ENCODE measurements at regions of chr17 and their contacts with region 1.

Region 1: GRCh38 chr17:2172077-2172851 is 117.4 kb downstream of the HIC1 start:
- DNase-seq: peak; percentile 98
- H3K4me3 ChIP-seq: peak overlapping the region in 1 of 3 experiments; percentile 40
- H3K27ac ChIP-seq: peak overlapping the region; percentile 94
- H3K4me1 ChIP-seq: peaks cover 59% of the 10 kb centered on the region
- H3K27me3 ChIP-seq: no peaks in the 10 kb centered on the region
- CTCF ChIP-seq: no peak
- POLR2A ChIP-seq: peak; percentile 43

Region 2: DNA sequence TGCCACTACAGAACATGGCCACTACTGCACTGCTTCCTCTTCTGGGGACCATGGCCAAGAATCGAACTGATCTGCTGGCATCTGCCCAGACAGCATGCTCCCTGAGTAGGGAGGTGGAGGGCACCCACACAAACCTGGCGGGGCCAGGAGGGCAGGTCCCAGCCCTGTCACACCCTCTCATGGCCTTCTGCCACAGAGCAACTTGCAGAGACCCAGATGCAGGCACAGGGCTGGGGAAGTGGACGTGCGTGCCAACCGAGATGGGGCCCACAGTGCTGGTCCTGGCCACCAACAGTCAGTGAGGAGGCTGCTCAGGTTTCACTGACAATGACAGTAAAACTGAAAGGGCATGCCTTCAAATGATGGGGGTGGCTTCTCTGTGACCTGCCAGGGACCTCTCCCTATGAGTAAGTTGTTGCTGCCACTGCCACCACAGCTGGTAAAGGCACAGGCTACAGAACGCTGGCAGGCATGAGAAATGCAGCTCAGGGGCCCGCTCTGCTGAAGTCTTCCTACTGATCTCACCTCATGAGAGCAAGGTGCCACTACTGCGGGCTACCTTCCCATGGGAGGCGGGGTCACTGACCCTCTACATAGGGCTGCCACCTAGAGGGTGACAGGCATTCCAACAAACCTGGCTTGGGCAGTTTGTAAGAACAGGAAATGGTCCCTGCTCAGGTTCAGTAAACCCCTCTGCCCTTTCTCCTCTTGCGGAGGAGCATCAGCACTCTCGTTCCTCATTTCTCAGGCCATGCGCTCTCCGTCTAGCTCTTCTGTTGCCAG is 101.8 kb before region 1 on chr17:
- CTCF ChIA-PET with region 1: interaction called, 6 read pairs
- POLR2A ChIA-PET with region 1: interaction called, 4 read pairs
- dilution Hi-C with region 1: no loop called
- intact Hi-C with region 1: loop called (anchors 1 kb)
- DNase-seq: no peak
- H3K4me3 ChIP-seq: no peak overlapping the region
- H3K27ac ChIP-seq: peak overlapping the region; percentile 93
- H3K4me1 ChIP-seq: peaks cover 62% of the 10 kb centered on the region
- H3K27me3 ChIP-seq: no peaks in the 10 kb centered on the region
- CTCF ChIP-seq: no peak
- POLR2A ChIP-seq: no peak

Region 3: GRCh38 chr17:2087597-2088211 is 84.6 kb before region 1 on chr17:
- CTCF ChIA-PET with region 1: interaction called, 13 read pairs
- POLR2A ChIA-PET with region 1: interaction called, 4 read pairs
- dilution Hi-C with region 1: no loop called
- intact Hi-C with region 1: loop called (anchors 1 kb)
- DNase-seq: peak; percentile 86
- H3K4me3 ChIP-seq: no peak overlapping the region
- H3K27ac ChIP-seq: peak overlapping the region; percentile 54
- H3K4me1 ChIP-seq: peaks cover 75% of the 10 kb centered on the region
- H3K27me3 ChIP-seq: no peaks in the 10 kb centered on the region
- CTCF ChIP-seq: no peak
- POLR2A ChIP-seq: no peak

Region 4: DNA sequence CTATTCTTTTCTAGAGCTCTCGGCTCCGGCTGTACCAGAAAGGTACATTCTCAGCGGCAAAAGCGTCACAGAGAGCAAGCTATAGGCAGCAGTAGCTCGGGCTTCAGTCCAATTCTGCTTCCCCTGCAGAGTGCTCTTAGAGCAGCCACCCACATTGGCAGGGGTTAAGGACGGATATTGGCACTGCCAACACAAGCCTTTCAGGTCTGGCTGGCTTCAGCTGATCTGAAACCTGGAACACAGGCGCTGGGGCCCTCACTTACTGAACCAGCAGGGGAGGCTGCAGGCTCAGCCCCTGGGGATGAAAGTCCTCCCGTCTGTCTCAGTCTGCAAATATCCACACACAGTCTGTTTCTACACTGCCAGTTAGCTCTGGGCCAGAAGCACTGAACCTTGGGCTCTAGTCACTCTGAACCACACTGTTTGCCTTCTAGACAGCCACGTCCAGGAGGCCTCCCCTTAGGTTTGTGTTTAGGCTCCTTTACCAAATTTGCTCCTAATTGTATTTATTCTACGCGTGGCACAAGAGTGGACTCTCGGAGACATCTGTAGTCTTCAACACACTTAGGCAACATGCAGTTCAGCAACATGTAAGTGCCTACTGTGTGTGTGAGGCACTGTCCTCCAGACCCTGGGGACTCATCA is 77.3 kb before region 1 on chr17:
- CTCF ChIA-PET with region 1: interaction called, 14 read pairs
- POLR2A ChIA-PET with region 1: interaction called, 4 read pairs
- dilution Hi-C with region 1: no loop called
- intact Hi-C with region 1: loop called (anchors 1 kb)
- DNase-seq: peak; percentile 78
- H3K4me3 ChIP-seq: no peak overlapping the region
- H3K27ac ChIP-seq: no peak overlapping the region
- H3K4me1 ChIP-seq: peaks cover 15% of the 10 kb centered on the region
- H3K27me3 ChIP-seq: no peaks in the 10 kb centered on the region
- CTCF ChIP-seq: peak; percentile 39 to 77
- POLR2A ChIP-seq: no peak

Region 5: GRCh38 chr17:2111719-2112118 is 60.5 kb before region 1 on chr17:
- CTCF ChIA-PET with region 1: no interaction called
- POLR2A ChIA-PET with region 1: no interaction called
- dilution Hi-C with region 1: no loop called
- intact Hi-C with region 1: no loop called
- DNase-seq: no peak
- H3K4me3 ChIP-seq: no peak overlapping the region
- H3K27ac ChIP-seq: no peak overlapping the region
- H3K4me1 ChIP-seq: peaks cover 8% of the 10 kb centered on the region
- H3K27me3 ChIP-seq: no peaks in the 10 kb centered on the region
- CTCF ChIP-seq: no peak
- POLR2A ChIP-seq: no peak

Region 6: DNA sequence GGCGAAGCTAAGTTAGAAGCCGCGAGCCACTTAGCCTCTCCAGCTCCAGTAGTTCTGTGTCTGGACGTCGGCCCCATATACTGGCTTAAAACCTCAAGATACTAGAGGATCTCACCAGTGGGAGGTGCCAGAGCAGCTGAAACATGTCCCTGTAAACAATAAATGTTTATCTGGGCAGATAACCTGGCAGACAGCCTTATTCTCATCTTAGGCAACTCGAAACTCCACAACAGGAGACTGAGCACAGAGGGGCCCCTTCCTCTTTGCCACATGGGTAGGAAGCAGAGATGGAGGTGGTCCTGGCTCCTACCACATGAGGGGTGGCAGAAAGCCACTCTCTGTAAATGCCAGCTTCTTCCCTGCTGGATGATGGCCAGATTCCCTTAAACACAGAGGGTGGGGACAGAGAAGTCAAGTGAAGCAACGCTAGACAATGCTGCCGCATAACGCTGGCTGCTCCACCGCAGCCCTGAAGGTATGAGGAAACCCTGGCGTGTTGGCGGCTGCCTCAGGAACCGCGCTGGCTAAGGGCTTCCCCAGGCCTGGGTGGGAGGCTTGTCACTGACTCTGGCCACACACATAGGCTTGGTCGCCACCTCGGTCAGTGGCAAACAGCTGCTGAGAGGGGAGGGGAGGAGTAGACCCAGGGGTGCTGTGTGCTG is 49.5 kb before region 1 on chr17:
- CTCF ChIA-PET with region 1: interaction called, 9 read pairs
- POLR2A ChIA-PET with region 1: no interaction called
- dilution Hi-C with region 1: no loop called
- intact Hi-C with region 1: loop called (anchors 1 kb)
- DNase-seq: peak; percentile 73
- H3K4me3 ChIP-seq: no peak overlapping the region
- H3K27ac ChIP-seq: peak overlapping the region; percentile 0
- H3K4me1 ChIP-seq: peaks cover 24% of the 10 kb centered on the region
- H3K27me3 ChIP-seq: no peaks in the 10 kb centered on the region
- CTCF ChIP-seq: no peak
- POLR2A ChIP-seq: no peak

Region 7: DNA sequence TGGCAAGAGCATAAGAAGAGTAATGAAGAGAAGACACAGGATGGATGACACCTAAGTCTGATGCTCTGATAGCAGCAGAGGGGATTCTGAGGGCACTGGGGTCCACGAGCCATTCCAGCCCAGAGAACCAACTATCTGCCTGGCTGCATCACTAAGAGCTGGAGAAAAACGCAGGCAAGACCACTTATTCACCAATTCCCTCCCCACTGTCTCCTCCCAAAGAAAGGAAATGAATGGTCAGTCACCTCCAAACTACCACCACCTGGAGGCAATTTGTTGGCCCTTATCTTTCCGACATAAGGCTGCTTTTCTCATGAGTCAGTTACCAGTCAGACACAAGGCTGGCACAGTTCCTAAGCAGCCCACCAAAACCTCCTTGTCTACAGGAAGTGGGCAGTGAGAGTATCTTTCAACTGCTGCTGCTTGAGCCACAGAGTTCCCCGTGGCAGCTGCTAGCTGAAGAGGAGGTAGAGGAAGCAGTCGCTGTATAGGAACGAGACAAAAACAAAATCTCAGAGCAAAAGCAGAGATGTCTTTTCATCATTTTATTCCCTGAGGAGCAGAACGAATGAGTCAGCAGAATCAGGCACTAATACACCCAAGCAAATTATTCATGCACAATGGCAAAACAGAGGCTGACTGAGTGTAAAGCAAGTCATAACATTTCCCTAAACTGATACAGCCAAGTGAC is 20.2 kb after region 1 on chr17:
- CTCF ChIA-PET with region 1: interaction called, 15 read pairs
- POLR2A ChIA-PET with region 1: interaction called, 10 read pairs
- dilution Hi-C with region 1: no loop called
- intact Hi-C with region 1: loop called (anchors 1 kb)
- DNase-seq: peak; percentile 98
- H3K4me3 ChIP-seq: no peak overlapping the region
- H3K27ac ChIP-seq: peak overlapping the region; percentile 88
- H3K4me1 ChIP-seq: peaks cover 40% of the 10 kb centered on the region
- H3K27me3 ChIP-seq: no peaks in the 10 kb centered on the region
- CTCF ChIP-seq: no peak
- POLR2A ChIP-seq: peak; percentile 75

Region 8: DNA sequence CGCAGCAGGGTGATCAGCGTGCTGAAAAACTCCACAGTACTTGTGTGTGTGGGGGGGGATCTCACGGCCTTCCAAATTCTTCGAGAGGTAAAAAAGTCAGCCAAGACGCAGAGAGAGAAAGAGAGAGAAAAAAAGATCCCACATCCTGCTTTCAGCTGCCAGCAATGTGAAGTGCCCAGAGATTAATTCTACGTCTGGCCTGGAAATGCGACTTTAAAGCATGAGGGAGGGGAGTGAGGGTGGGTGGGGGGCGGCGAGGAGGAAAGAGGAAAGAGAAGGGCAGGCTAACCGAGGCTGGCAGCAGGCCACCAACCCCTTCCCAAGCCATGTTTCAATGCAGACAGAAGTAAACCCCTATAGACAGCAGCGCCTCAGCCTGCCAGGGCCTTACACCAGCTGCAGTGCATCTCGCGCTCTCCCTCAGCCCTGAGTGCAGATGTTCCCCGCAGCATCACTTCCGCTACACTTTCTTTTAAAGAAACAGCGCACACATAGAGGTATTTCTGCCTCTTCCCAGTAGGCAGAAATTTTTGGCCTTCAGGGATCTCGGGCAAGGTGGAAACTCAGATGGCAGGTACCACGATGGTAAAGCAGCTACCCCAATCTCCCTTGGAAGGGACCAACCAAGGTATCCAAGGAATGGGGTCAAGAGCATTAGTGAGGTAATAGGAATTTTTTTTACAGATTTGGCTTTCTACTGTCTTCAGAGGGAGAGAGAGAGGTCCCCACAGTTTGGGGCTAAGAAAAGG is 43.5 kb after region 1 on chr17:
- CTCF ChIA-PET with region 1: interaction called, 6 read pairs
- POLR2A ChIA-PET with region 1: interaction called, 15 read pairs
- dilution Hi-C with region 1: no loop called
- intact Hi-C with region 1: loop called (anchors 1 kb)
- DNase-seq: peak; percentile 84
- H3K4me3 ChIP-seq: no peak overlapping the region
- H3K27ac ChIP-seq: peak overlapping the region; percentile 81
- H3K4me1 ChIP-seq: peaks cover 46% of the 10 kb centered on the region
- H3K27me3 ChIP-seq: no peaks in the 10 kb centered on the region
- CTCF ChIP-seq: no peak
- POLR2A ChIP-seq: peak; percentile 54

Region 9: DNA sequence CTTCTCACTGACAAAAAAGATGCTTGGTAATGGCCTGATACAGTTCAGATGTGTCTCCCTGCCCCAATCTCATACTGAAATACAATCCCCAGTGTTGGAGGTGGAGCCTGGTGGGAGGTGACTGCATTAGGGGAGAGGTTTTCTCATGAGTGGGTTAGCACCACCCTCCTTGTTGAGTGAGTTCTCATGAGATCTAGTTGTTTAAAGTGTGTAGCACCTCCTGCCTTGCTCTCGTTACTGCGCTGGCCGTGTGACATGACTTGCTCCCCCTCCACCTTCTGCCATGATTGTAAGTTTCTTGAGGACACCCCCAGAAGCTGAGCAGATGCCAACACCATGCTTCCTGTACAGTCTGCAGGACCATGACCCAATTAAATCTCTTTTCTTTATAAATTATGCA is 159.0 kb after region 1 on chr17:
- CTCF ChIA-PET with region 1: no interaction called
- POLR2A ChIA-PET with region 1: no interaction called
- dilution Hi-C with region 1: no loop called
- intact Hi-C with region 1: no loop called
- DNase-seq: no peak
- H3K4me3 ChIP-seq: no peak overlapping the region
- H3K27ac ChIP-seq: no peak overlapping the region
- H3K4me1 ChIP-seq: peaks cover 9% of the 10 kb centered on the region
- H3K27me3 ChIP-seq: no peaks in the 10 kb centered on the region
- CTCF ChIP-seq: no peak
- POLR2A ChIP-seq: no peak

Measured in endothelial cell of umbilical vein (primary cell).